AG04449 (cell line): ENCODE measurements at regions of chr2 and their contacts with region 1.

Region 1: DNA sequence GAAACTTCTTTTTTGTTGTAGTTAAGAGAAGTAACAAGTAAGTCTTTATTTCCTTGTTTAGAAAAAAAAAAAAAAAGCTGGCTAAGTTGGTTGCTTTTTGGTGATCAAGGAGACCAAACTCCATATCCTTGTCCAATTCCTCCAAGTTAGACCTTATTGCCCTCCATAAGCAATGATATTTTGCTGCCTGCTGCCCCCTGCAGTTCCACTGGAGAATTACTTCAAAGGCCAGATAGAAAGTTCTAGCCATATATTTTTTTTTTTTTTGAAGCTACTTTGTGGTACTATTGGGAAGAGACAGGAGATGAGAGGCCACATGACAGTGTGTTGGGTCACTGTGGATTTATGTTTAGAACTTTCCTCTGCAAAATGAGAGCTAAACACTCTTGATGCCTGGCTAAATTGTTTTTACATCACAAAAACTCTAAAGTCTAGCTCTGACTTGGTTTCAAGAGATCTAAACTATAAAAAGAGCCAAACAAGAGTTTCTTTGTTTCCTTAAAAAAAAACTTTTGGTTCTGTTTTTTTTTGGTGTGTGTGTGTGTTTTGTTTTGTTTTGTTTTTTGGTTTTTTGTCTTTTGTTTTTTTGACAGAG is 80.7 kb upstream of the RASGRP3 start:
- DNase-seq: no peak
- H3K4me3 ChIP-seq: no peak overlapping the region
- CTCF ChIP-seq: peak; percentile 52

Region 2: GRCh38 chr2:33406622-33407021 is 10.9 kb after region 1 on chr2:
- CTCF ChIA-PET with region 1: interaction called, 14 read pairs
- POLR2A ChIA-PET with region 1: no interaction called
- DNase-seq: no peak
- H3K4me3 ChIP-seq: no peak overlapping the region
- CTCF ChIP-seq: no peak

Region 3: DNA sequence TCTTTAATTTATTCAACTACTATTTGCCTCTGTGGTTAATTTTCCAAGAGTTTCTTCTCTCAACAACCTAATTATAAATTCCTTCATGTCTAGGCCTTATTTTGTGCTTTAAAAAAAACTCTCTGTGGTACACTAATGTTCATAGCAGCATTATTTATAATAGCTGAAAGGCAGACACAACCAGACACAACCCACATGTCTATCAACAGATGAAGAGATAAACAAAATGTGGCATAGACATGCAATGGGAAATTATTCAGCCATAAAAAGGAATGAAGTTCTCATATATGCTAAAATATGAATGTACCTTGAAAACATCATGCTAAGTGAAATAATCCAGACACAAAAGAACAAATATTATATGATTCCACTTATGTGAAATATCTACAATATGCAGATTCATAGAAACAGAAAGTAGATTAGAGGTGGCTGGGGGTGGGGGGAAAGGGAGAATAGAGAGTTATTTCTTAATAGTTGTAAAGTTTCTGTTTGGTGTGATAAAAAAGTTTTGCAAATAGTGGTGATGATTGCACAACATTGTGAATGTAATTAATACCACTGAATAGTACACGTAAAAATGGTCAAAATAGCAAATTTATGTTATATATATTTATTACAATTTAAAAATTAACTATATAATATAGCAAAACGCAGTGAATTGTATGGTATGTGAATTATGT is 52.6 kb after region 1 on chr2:
- CTCF ChIA-PET with region 1: no interaction called
- POLR2A ChIA-PET with region 1: no interaction called
- DNase-seq: no peak
- H3K4me3 ChIP-seq: no peak overlapping the region
- CTCF ChIP-seq: no peak